ENCODE measurements at regions of chr10 and their contacts with region 1.

Region 1: DNA sequence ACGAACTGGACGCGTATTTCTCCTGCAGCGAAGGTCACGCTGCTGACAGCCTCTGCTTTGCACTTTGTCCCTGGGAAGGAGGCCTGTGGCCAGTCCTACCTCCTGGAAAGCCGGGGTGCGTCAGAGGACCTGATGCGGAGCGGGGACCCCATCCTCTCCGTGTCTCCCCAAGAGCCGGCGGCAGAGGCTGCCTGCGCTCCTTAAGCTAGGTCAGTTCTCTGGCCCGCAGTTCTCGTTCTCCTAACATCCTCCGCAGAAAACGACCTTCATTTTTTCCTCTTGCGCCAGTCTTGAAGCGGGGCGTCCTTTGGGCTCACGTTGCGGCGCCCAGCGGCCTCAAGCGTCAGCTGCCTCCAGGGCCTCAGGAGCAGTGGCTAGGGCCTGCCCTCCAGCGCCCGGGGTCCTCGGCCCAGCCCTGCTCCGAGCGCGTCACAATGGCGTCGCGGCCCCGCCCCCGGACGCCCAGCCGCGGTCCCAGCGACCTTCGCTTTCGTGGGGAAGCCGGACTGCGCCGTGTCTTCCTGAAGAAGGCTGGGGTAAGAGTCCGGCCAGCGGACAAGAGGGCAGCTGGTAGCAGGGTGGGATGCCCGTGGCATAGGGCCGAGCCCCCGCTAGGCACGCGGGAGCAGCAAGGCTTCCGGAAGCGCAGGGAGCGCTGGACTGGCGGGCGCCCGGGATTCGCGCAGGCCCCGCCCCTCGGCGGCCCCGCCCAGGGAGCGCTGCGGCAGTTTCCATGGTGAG is at the start of gene ZNF487:
- DNase-seq: peak; percentile 89
- H3K4me3 ChIP-seq: peak within 1 kb of the TSS; percentile 81
- H3K27ac ChIP-seq: peak within 1 kb of the TSS; percentile 33
- H3K4me1 ChIP-seq: peaks cover 33% of the 10 kb centered on the region
- CTCF ChIP-seq: 0 out of 2 replicates have a peak, but pooled peaks have one; percentile 28
- total RNA-seq, gene ZNF487: 6.5 and 8.1 TPM in 2 replicates

Region 2: GRCh38 chr10:43453266-43453831 is 16.8 kb after region 1 on chr10:
- CTCF ChIA-PET with region 1: no interaction called
- POLR2A ChIA-PET with region 1: interaction called, 9 read pairs
- intact Hi-C with region 1: loop called (anchors 1 kb)
- DNase-seq: peak; percentile 60
- H3K4me3 ChIP-seq: peak overlapping the region; percentile 61
- H3K27ac ChIP-seq: peak overlapping the region; percentile 100
- H3K4me1 ChIP-seq: peaks cover 55% of the 10 kb centered on the region
- CTCF ChIP-seq: no peak